ENCODE measurements at regions of chr11 and their contacts with region 1.

Region 1: DNA sequence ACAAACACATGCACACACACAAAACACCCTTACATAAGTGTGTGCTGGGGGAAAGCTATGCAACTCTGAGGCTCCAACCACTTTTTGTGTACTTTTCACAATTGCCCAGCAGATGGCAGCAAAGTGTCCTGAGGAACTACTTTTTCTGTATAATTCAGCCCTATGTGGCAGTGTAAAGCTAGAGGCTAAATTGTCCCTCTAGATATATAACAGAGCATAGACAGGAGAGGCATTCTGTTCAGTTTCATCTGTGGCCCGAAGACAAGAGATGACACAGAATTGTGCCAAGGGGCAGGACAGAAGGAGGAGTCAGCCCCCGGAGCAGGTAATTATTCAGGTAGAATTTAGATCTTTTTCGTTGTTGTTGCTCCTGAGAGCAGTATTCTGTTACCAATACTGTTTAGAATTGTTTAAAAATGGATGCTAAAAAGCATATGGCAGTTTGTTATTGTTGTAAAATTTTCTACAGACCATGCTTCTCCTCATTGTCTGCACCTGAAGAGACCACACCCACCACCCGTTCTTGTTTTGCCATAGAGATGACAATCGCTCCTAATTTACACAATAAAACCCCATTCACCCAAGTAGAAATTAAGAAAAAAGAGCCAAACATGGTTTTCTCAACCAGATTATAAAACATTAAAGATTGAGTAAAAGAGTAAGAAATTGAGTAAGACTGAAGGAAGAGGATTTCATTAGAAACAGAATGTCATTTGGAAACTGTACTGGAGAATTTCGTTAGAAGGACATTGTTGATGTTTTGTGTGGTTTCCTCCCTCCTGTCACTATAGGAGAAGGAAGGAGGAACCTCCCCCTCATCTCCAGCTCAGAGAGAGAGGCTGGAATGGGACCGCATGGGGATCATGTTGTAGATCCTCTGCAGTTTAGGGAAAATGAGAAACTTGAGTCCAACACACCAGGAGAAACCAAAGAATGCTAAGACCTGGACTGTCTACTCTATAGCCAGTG is 14.5 kb upstream of the MS4A7 start:
- DNase-seq: peak; percentile 39 to 57 (median 43)
- H3K4me3 ChIP-seq: no peak overlapping the region
- H3K4me3 Mint-ChIP-seq: no peak overlapping the region
- H3K27ac ChIP-seq: no peak overlapping the region
- H3K27ac Mint-ChIP-seq: no peak overlapping the region
- H3K4me1 ChIP-seq: no peaks in the 10 kb centered on the region
- H3K4me1 Mint-ChIP-seq: no peaks in the 10 kb centered on the region
- H3K27me3 ChIP-seq: no peaks in the 10 kb centered on the region
- H3K27me3 Mint-ChIP-seq: peaks cover 9 to 18% of the 10 kb centered on the region in 2 donors

Region 2: DNA sequence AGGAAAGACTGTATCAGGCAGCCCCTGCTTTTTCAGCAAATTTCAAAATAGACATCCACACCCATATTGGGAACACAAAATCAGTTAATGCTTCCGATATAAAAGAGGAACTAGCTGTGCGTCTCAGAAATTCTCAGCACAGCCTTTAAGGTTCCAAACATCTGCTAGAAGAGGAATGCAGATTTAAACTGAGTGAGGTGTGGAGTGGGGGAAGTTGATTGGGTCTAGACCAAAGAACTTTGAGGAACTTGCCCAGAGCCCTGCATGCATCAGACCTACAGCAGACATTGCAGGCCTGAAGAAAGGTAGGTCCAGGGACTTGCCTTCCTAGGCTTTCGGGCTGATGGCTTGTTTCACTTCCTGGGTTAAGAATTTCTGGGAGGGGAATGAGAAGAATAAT is 83.4 kb before region 1 on chr11 and contains the start of gene MS4A4A:
- CTCF ChIA-PET with region 1: no interaction called
- POLR2A ChIA-PET with region 1: no interaction called
- intact Hi-C with region 1: no loop called
- DNase-seq: no peak
- H3K4me3 ChIP-seq: no peak within 1 kb of the TSS
- H3K4me3 Mint-ChIP-seq: no peak within 1 kb of the TSS
- H3K27ac ChIP-seq: no peak within 1 kb of the TSS
- H3K27ac Mint-ChIP-seq: no peak within 1 kb of the TSS
- H3K4me1 ChIP-seq: no peaks in the 10 kb centered on the region
- H3K4me1 Mint-ChIP-seq: no peaks in the 10 kb centered on the region
- H3K27me3 ChIP-seq: peaks cover 4% of the 10 kb centered on the region
- H3K27me3 Mint-ChIP-seq: peaks cover 17 to 18% of the 10 kb centered on the region in 2 donors
- total RNA-seq, gene MS4A4A: 0.39 to 0.99 TPM

Region 3: DNA sequence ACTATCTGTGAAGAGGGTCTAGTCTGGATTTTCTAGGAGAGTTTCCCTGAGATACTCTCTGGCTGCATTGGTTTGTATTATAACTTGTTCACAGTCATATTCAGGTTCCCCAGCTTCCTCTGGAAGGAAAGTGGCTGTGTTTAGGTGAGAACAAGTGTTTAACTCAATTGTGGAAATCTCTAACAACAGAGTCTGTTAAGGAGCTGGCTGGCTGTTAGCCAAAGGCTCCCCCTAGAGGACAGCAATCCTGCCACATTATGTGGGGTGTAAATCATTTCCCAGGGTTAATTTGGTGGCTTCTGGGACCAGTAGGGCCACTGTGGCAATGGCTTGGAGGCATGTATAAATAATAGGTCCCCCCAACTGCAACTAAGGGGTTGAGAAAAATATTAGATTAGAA is 18.3 kb before region 1 on chr11:
- CTCF ChIA-PET with region 1: interaction called, 14 read pairs
- POLR2A ChIA-PET with region 1: no interaction called
- intact Hi-C with region 1: no loop called
- DNase-seq: no peak
- H3K4me3 ChIP-seq: no peak overlapping the region
- H3K4me3 Mint-ChIP-seq: no peak overlapping the region
- H3K27ac ChIP-seq: no peak overlapping the region
- H3K27ac Mint-ChIP-seq: no peak overlapping the region
- H3K4me1 ChIP-seq: no peaks in the 10 kb centered on the region
- H3K4me1 Mint-ChIP-seq: no peaks in the 10 kb centered on the region
- H3K27me3 ChIP-seq: no peaks in the 10 kb centered on the region
- H3K27me3 Mint-ChIP-seq: peaks cover 14 to 17% of the 10 kb centered on the region in 2 donors

Region 4: GRCh38 chr11:60485986-60486385 is 122.2 kb after region 1 on chr11:
- CTCF ChIA-PET with region 1: interaction called, 5 read pairs
- POLR2A ChIA-PET with region 1: no interaction called
- intact Hi-C with region 1: loop called (anchors 1 kb)
- DNase-seq: peak in 3 of 5 donors; percentile 0 to 9 (median 2)
- H3K4me3 ChIP-seq: no peak overlapping the region
- H3K4me3 Mint-ChIP-seq: no peak overlapping the region
- H3K27ac ChIP-seq: no peak overlapping the region
- H3K27ac Mint-ChIP-seq: no peak overlapping the region
- H3K4me1 ChIP-seq: peaks cover 6% of the 10 kb centered on the region
- H3K4me1 Mint-ChIP-seq: peaks cover 6 to 15% (median 11%) of the 10 kb centered on the region in 4 donors
- H3K27me3 ChIP-seq: no peaks in the 10 kb centered on the region
- H3K27me3 Mint-ChIP-seq: peaks cover 2 to 9% of the 10 kb centered on the region in 2 donors

Region 5: GRCh38 chr11:60625262-60625661 is 261.4 kb after region 1 on chr11:
- CTCF ChIA-PET with region 1: interaction called, 39 read pairs
- POLR2A ChIA-PET with region 1: no interaction called
- intact Hi-C with region 1: no loop called
- DNase-seq: no peak
- H3K4me3 ChIP-seq: no peak overlapping the region
- H3K4me3 Mint-ChIP-seq: no peak overlapping the region
- H3K27ac ChIP-seq: no peak overlapping the region
- H3K27ac Mint-ChIP-seq: no peak overlapping the region
- H3K4me1 ChIP-seq: no peaks in the 10 kb centered on the region
- H3K4me1 Mint-ChIP-seq: no peaks in the 10 kb centered on the region
- H3K27me3 ChIP-seq: no peaks in the 10 kb centered on the region
- H3K27me3 Mint-ChIP-seq: peaks cover 4 to 10% of the 10 kb centered on the region in 2 donors

Region 6: GRCh38 chr11:60756307-60757032 is 392.6 kb after region 1 on chr11 and contains the start of gene MS4A15:
- CTCF ChIA-PET with region 1: no interaction called
- POLR2A ChIA-PET with region 1: no interaction called
- intact Hi-C with region 1: no loop called
- DNase-seq: no peak
- H3K4me3 ChIP-seq: no peak within 1 kb of the TSS
- H3K4me3 Mint-ChIP-seq: no peak within 1 kb of the TSS
- H3K27ac ChIP-seq: no peak within 1 kb of the TSS
- H3K27ac Mint-ChIP-seq: no peak within 1 kb of the TSS
- H3K4me1 ChIP-seq: no peaks in the 10 kb centered on the region
- H3K4me1 Mint-ChIP-seq: peaks cover 0 to 2% (median 0%) of the 10 kb centered on the region in 4 donors
- H3K27me3 ChIP-seq: no peaks in the 10 kb centered on the region
- H3K27me3 Mint-ChIP-seq: peaks cover 31 to 37% of the 10 kb centered on the region in 2 donors
- total RNA-seq, gene MS4A15: not detected